ENCODE measurements at regions of chr20 and their contacts with region 1.

Region 1: GRCh38 chr20:10622657-10623418 is 51.0 kb downstream of the JAG1 start:
- DNase-seq: no peak
- H3K4me3 Mint-ChIP-seq: no peak overlapping the region
- H3K27ac Mint-ChIP-seq: no peak overlapping the region
- H3K4me1 Mint-ChIP-seq: no peaks in the 10 kb centered on the region
- H3K27me3 Mint-ChIP-seq: no peaks in the 10 kb centered on the region
- CTCF ChIP-seq: no peak

Region 2: GRCh38 chr20:10357974-10358373 is 264.9 kb before region 1 on chr20:
- CTCF ChIA-PET with region 1: no interaction called
- intact Hi-C with region 1: no loop called
- DNase-seq: no peak
- H3K4me3 Mint-ChIP-seq: no peak overlapping the region
- H3K27ac Mint-ChIP-seq: no peak overlapping the region
- H3K4me1 Mint-ChIP-seq: peaks cover 16% of the 10 kb centered on the region
- H3K27me3 Mint-ChIP-seq: no peaks in the 10 kb centered on the region
- CTCF ChIP-seq: no peak

Region 3: DNA sequence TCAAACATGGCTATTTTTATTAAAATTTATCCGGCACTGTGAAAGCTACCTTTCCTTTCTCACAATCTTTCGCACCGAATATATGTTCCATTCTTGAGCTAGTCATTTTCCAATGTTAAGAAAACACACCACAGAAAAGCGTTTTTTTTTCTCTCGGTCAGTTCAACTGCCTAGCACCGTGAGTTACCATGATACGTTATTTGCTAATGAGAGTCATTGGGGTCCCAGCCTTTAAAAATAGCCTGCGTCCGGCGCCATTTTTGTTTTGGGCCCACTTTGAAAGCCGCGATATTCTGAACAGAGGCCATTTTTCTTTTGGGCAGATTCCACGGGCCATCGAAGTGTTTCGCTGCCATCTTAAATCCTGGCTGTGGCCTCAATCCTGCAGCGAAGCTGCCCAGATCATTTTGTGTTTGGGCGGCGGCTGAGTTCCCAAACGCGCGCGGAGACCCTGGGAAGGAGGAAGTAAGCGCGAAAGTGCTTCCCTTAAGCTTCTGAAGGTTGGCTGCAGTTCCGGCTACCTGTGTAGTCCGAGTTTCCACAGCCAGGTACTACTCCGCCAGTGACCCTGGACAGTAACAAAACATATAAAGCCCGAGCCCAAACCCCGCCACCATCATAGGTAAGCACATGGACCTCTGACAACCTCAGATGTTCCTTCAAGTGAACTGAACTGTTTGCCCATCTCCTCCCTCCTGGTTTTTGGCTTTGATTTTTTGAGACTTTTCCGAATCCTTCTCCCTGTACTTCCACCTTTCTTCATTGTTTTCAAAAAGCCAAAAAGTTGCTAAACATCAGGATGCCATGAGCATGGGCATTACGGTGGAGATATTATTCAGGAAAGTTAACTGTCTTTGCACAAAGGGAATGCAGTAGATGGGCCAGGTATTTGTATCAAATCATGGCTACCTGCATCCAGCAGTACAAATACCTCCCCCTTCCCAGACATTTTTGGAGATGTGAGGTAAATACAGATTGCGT is 187.7 kb before region 1 on chr20 and contains the start of gene SLX4IP:
- CTCF ChIA-PET with region 1: no interaction called
- intact Hi-C with region 1: no loop called
- DNase-seq: peak; percentile 80
- H3K4me3 Mint-ChIP-seq: peak within 1 kb of the TSS; percentile 90
- H3K27ac Mint-ChIP-seq: peak within 1 kb of the TSS; percentile 78
- H3K4me1 Mint-ChIP-seq: peaks cover 27% of the 10 kb centered on the region
- H3K27me3 Mint-ChIP-seq: no peaks in the 10 kb centered on the region
- CTCF ChIP-seq: no peak
- total RNA-seq, gene SLX4IP: 5.4 and 6.4 TPM in 2 replicates

Region 4: DNA sequence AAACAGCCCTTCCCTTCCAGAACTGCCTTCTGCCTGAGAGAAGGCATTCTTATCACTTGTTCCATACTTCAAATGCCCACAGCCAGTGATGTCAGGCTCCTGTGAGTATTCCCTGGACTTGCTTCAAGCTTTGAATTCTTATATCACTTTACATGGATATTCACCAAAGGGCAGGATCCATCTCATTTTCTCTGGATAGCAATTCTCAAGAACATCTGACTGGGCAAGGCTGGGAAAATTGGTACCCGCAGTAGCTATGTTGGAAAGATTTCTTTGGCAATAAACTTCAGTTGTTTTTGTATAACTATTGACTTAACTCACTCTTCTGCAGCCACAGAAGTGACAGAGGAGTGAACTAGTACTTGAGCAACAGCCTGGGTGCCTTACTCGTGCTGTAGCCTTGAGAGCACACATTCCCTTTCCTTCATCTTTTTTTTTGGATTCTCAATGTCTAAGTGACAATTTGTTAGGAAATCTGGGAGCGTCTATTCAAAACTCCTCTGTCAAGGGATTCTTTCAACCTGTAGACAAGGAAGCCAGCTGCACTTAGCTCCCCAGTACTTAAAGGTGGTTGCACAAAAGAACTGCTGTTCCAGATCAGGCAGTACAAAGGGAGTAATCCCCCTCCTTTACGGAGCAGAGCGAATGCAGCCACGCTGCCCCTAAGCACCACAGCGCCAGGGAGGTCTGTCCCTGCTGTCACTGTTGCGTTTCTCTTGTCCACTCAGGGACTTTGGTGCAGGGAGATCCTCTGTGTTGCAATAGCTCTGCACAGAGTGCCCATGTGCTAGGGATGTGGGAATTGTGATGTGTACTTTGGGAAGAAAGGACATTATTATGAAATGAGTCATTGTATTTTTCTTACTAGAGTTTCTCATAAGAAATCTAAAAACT is 18.6 kb before region 1 on chr20:
- CTCF ChIA-PET with region 1: no interaction called
- intact Hi-C with region 1: no loop called
- DNase-seq: peak; percentile 23
- H3K4me3 Mint-ChIP-seq: no peak overlapping the region
- H3K27ac Mint-ChIP-seq: peak overlapping the region; percentile 16
- H3K4me1 Mint-ChIP-seq: peaks cover 13% of the 10 kb centered on the region
- H3K27me3 Mint-ChIP-seq: no peaks in the 10 kb centered on the region
- CTCF ChIP-seq: no peak

Region 5: DNA sequence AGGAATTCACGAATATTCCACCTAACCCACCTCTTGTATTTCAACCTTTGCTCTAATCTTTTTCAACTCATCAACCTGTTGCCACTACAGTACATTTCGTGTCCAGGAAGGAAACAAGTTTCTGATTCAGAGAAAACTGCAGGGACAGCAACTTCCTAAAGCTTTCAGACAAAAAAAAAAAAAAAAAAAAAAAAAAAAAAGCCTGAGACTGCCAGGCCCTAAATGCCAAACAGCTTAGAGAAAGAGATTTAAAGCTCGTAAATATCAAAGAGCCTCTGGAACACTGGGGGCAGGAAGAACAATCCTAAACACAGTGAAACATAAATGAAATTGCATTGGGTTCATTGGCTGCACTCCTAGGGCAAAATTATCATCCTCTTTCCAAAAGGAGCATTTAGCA is 1974.7 kb after region 1 on chr20:
- CTCF ChIA-PET with region 1: interaction called, 11 read pairs
- intact Hi-C with region 1: no loop called
- DNase-seq: no peak
- H3K4me3 Mint-ChIP-seq: no peak overlapping the region
- H3K27ac Mint-ChIP-seq: no peak overlapping the region
- H3K4me1 Mint-ChIP-seq: no peaks in the 10 kb centered on the region
- H3K27me3 Mint-ChIP-seq: no peaks in the 10 kb centered on the region
- CTCF ChIP-seq: no peak

Measured in Calu3 (cell line).